Activated T-helper 2 cell treated with anti-CD3 and anti-CD28 coated beads, Interferon-gamma antibody, Interleukin-2, Interleukin-4, amounts not matched to agents 10 μg/mL and 5 μg/mL and 100 μg/mL, durations not matched to agents 14 hours and 24 hours and 36 hours (primary cell): ENCODE measurements at regions of chr1 and their contacts with region 1.

Region 1: GRCh38 chr1:156767101-156767878 is at the start of gene PRCC:
- DNase-seq: peak; percentile 98
- H3K4me3 Mint-ChIP-seq: no peak within 1 kb of the TSS
- H3K27ac Mint-ChIP-seq: no peak within 1 kb of the TSS
- H3K4me1 Mint-ChIP-seq: peaks cover 36% of the 10 kb centered on the region
- H3K27me3 Mint-ChIP-seq: no peaks in the 10 kb centered on the region
- total RNA-seq, gene PRCC: 94.8 and 110 TPM in 2 replicates

Region 2: DNA sequence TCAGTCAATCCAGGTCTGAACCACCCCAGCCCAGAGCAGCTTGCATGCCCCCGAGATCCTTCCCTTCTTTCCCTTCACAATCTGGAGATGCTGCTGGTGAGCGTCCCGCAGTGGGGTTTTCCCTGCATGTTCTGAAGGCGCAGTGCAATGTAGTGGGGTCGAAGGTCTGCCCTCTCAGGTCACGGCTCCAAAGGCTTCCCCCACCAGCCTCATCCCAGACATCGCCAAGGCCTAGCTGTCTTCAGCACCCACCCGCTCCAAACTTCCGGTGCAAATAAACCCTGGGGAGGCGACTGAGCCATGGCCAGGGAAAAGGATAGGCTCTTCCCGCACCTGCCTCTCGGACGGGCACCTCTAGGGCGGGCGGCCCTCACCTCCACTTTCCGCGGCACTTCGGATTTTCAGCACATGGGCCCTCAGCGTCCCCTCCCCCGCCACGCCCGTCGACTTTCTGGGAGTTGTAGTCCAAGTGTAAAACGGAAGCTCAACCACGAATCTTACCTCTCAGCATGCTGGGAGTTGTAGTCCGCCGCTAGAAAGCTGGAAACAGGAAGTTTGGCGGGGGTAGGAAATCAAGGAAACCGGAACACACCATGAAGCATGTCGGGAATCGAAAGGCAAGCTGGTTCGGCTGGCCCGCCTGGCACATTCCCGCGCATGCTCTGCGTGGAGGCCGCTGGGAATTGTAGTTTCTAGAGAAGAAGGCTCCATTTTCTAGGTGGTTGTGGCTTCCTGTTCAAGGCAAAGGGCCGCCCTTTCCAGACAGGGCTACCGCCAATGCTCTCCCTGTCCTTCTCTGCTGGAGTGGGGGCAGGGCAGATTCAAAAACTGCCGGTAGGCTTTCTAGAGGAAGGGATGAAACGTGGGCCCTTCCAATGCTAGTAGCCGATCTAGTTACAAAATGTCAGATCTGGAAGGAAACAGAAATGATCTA is 26.3 kb before region 1 on chr1 and contains the start of gene MRPL24:
- intact Hi-C with region 1: loop called (anchors 1 kb)
- DNase-seq: peak; percentile 97
- H3K4me3 Mint-ChIP-seq: peak within 1 kb of the TSS; percentile 95
- H3K27ac Mint-ChIP-seq: peak within 1 kb of the TSS; percentile 92
- H3K4me1 Mint-ChIP-seq: peaks cover 29% of the 10 kb centered on the region
- H3K27me3 Mint-ChIP-seq: no peaks in the 10 kb centered on the region
- total RNA-seq, gene MRPL24: 116 and 124 TPM in 2 replicates

Region 3: DNA sequence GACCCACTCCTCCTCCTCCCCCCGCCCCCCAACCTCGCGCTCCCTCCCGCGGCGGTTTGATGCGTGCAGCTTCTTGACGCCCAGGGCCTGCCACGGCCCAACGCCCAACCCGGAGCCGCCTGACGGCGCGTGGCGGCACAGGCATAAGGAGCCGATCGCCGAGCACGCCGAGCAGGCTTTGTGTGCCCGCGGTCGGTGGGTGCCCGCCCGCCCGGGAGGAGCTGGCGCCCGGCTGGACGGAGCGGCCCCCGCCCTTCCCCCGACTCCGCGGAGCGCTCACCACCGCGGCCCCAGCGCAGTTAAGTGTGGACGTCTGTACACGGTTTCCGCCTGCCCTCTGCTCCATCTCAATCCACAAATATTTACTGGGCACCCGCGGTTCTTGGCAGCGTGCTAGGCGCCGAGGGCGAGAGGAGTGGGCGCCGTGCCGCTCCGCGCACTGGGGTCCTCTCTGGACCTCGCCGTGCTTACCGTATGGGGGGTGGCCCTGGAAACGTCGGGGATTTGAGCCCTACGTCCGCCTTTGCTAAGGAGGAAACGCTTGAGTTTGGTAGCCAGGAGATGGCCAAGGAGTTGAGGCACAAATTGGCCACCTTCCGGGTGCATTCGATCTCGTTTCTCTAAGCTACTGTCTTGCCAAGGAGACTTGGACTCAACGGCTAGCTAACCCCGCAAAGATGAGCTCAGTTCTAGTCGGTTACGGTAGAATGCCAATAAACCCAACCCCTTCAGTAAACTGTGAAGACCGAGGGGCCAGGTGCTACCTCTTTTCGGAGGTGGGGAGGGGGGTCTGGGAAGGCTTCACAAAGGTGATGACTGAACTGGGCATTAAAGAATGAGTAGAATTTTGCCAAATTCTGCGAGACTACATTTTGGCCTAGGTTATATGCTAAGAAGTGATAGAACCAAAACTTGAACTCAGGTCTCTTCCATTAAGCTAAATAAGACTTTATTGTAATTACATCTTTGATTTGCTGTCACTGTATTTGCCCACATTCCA is 15.2 kb before region 1 on chr1:
- intact Hi-C with region 1: loop called (anchors 1 kb)
- DNase-seq: peak; percentile 93
- H3K4me3 Mint-ChIP-seq: peak overlapping the region; percentile 97
- H3K27ac Mint-ChIP-seq: peak overlapping the region; percentile 92
- H3K4me1 Mint-ChIP-seq: peaks cover 32% of the 10 kb centered on the region
- H3K27me3 Mint-ChIP-seq: no peaks in the 10 kb centered on the region

Region 4: DNA sequence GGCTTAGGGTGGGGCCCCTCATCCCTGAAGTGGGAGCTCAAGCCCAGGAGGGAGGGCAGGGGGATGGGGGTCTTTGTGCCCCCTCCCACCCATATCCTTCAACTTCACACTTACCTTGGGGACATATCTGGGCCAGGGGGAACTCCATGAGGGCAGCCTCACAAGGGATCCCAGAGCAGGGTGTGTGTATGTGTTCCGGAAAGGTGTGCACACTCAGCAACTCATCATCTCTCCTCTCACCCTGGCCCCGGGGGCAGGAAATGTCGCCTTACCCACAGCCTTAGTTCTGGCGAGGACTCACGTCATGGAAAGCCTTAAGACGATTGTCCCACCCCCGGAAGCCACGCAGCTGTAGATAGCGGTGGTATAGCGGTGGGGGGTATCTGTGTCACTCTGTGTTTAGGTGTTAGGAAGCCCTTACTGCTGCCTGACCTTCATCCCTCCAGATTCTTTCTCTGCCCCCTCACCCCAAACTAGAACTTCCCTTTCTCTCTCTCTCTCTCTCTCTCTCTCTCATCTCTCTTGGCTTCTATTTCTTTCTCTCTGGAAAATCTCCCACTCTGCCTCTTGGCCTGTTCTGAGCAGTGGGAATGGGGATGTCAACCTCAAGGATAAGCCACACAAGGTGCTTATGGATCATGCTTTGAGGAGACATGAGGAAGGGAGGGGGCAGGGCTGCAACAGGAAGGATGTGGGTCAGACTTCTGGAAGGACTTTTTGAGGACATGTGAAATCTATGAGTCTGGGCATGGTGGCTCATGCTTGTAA is 49.5 kb after region 1 on chr1 and contains the start of gene SH2D2A:
- intact Hi-C with region 1: loop called (anchors 1 kb)
- DNase-seq: peak; percentile 94
- H3K4me3 Mint-ChIP-seq: peak within 1 kb of the TSS; percentile 88
- H3K27ac Mint-ChIP-seq: peak within 1 kb of the TSS; percentile 100
- H3K4me1 Mint-ChIP-seq: peaks cover 48% of the 10 kb centered on the region
- H3K27me3 Mint-ChIP-seq: no peaks in the 10 kb centered on the region
- total RNA-seq, gene SH2D2A: 453 and 474 TPM in 2 replicates

Region 5: GRCh38 chr1:156860113-156860627 is 92.9 kb after region 1 on chr1:
- intact Hi-C with region 1: no loop called
- DNase-seq: peak; percentile 48
- H3K4me3 Mint-ChIP-seq: peak overlapping the region; percentile 87
- H3K27ac Mint-ChIP-seq: peak overlapping the region; percentile 44
- H3K4me1 Mint-ChIP-seq: peaks cover 44% of the 10 kb centered on the region
- H3K27me3 Mint-ChIP-seq: peaks cover 27% of the 10 kb centered on the region

Region 6: DNA sequence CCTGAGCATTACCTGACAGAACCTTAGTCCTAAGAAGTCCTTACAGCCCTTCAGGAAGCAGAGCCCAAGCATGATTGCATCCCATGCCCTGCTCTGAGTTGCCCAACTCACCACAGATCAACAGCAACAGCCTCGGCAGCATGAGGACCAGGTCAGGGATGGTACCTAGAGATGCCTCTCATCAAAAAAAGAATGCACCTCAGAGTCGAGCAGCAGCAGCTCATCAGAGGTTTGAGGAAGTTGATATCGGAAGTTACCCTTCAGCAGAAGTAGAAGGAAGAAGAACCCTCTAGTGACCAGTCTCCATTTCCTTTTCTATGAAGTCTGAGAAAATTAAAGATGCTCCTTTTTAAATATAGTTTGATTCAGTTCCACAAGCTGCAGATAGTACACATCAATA is 1052.6 kb after region 1 on chr1 and contains the start of gene FCRL1:
- intact Hi-C with region 1: no loop called
- DNase-seq: no peak
- H3K4me3 Mint-ChIP-seq: no peak within 1 kb of the TSS
- H3K27ac Mint-ChIP-seq: no peak within 1 kb of the TSS
- H3K4me1 Mint-ChIP-seq: no peaks in the 10 kb centered on the region
- H3K27me3 Mint-ChIP-seq: no peaks in the 10 kb centered on the region
- total RNA-seq, gene FCRL1: not detected in 2 replicates